HepG2 (cell line): ENCODE measurements at regions of chr1 and their contacts with region 1.

Region 1: GRCh38 chr1:153990468-153991150 is at the start of gene RPS27:
- DNase-seq: peak; percentile 98
- ATAC-seq: peak; percentile 24
- H3K4me3 ChIP-seq: peak within 1 kb of the TSS; percentile 77 to 97 (median 94)
- H3K27ac ChIP-seq: peak within 1 kb of the TSS; percentile 85
- H3K4me1 ChIP-seq: peaks cover 27% of the 10 kb centered on the region
- H3K27me3 ChIP-seq: no peaks in the 10 kb centered on the region; a peak in 1 of 5 replicates
- CTCF ChIP-seq: no peak
- EP300 ChIP-seq: peak; percentile 22 to 76; a peak in 3 of 4 replicates
- POLR2A ChIP-seq: peak; percentile 100
- RAD21 ChIP-seq: 0 out of 2 replicates have a peak, but pooled peaks have one; percentile 25
- total RNA-seq, gene RPS27: 3,737 and 4,047 TPM in 2 replicates

Region 2: GRCh38 chr1:153677718-153678505 is 312.7 kb before region 1 on chr1:
- CTCF ChIA-PET with region 1: no interaction called
- POLR2A ChIA-PET with region 1: no interaction called
- in situ Hi-C with region 1: loop called (anchors 10 kb)
- intact Hi-C with region 1: loop called (anchors 5 kb)
- DNase-seq: no peak
- ATAC-seq: peak; percentile 58
- H3K4me3 ChIP-seq: peak overlapping the region in 2 of 3 experiments; percentile 57 to 72; a peak in 4 of 6 replicates
- H3K27ac ChIP-seq: no peak overlapping the region
- H3K4me1 ChIP-seq: peaks cover 25% of the 10 kb centered on the region
- H3K27me3 ChIP-seq: peaks cover 20 to 51% of the 10 kb centered on the region in 2 experiments
- CTCF ChIP-seq: peak; percentile 92
- EP300 ChIP-seq: no peak
- POLR2A ChIP-seq: no peak
- RAD21 ChIP-seq: peak; percentile 88

Region 3: DNA sequence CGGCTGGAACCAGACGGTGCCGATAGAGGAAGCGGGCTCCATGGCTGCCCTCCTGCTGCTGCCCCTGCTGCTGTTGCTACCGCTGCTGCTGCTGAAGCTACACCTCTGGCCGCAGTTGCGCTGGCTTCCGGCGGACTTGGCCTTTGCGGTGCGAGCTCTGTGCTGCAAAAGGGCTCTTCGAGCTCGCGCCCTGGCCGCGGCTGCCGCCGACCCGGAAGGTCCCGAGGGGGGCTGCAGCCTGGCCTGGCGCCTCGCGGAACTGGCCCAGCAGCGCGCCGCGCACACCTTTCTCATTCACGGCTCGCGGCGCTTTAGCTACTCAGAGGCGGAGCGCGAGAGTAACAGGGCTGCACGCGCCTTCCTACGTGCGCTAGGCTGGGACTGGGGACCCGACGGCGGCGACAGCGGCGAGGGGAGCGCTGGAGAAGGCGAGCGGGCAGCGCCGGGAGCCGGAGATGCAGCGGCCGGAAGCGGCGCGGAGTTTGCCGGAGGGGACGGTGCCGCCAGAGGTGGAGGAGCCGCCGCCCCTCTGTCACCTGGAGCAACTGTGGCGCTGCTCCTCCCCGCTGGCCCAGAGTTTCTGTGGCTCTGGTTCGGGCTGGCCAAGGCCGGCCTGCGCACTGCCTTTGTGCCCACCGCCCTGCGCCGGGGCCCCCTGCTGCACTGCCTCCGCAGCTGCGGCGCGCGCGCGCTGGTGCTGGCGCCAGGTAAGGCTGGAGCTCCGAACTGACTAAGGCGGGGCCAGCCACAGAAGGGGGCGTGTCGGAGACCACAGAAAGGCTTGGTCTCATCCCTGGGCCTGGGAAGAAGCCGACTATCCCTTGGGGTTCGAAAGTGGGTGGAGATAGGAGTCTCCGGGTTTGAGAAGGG is 214.9 kb before region 1 on chr1:
- CTCF ChIA-PET with region 1: no interaction called
- POLR2A ChIA-PET with region 1: interaction called, 14 read pairs
- in situ Hi-C with region 1: no loop called
- intact Hi-C with region 1: no loop called
- DNase-seq: no peak
- ATAC-seq: peak; percentile 76
- H3K4me3 ChIP-seq: peak overlapping the region; percentile 70 to 83 (median 75)
- H3K27ac ChIP-seq: peak overlapping the region; percentile 53
- H3K4me1 ChIP-seq: peaks cover 50% of the 10 kb centered on the region
- H3K27me3 ChIP-seq: no peaks in the 10 kb centered on the region
- CTCF ChIP-seq: peak; percentile 31
- EP300 ChIP-seq: no peak
- POLR2A ChIP-seq: peak in 1 of 2 experiments; percentile 77; a peak in 1 of 4 replicates
- RAD21 ChIP-seq: 0 out of 2 replicates have a peak, but pooled peaks have one; percentile 8

Region 4: DNA sequence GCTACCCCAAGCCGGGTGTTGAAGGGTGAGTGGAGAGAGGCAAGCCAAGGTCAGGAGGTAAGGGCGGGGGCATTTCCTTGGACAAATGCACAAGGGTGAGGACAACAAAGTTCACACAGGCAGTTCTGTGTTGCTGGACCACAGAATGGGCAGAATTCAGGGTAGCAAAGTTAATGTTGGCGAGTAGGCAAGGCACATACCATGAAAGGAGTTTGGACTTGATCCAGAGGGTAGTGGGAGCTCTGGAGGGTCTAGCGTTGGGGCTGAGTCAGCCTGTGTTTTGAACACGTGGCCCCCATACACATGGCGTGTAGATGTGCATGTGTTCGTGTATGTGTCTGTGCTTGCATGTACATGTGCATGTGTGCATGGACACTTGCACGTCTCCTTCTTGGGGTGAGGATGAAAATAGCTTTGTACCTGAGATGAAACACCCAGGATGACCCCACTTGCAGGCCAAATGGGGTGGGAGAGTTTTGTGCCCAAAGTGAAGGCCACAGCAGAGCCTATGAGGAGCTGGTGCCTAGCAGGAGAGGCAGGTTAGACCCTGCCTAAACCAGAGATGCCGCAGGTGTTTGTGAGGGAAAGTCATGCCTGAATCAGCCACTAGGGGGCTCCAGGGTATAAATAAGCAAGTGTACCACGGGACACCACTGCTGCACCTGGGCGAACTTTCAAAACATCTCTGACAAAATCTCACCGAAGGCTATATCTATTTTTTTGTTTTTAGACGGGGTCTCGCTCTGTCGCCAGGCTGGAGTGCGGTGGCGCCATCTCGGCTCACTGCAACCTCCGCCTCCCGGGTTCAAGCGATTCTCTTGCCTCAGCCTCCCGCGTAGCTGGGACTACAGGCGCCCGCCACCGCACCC is 193.6 kb before region 1 on chr1:
- CTCF ChIA-PET with region 1: interaction called, 35 read pairs
- POLR2A ChIA-PET with region 1: interaction called, 17 read pairs
- in situ Hi-C with region 1: loop called (anchors 5 kb)
- intact Hi-C with region 1: loop called (anchors 1 kb)
- DNase-seq: peak; percentile 65
- ATAC-seq: peak; percentile 66
- H3K4me3 ChIP-seq: no peak overlapping the region
- H3K27ac ChIP-seq: no peak overlapping the region
- H3K4me1 ChIP-seq: peaks cover 39% of the 10 kb centered on the region
- H3K27me3 ChIP-seq: peaks cover 7 to 45% of the 10 kb centered on the region in 2 experiments; a peak in 4 of 5 replicates
- CTCF ChIP-seq: peak; percentile 84
- EP300 ChIP-seq: no peak
- POLR2A ChIP-seq: no peak
- RAD21 ChIP-seq: peak; percentile 67

Region 5: GRCh38 chr1:153827168-153827964 is 163.2 kb before region 1 on chr1:
- CTCF ChIA-PET with region 1: no interaction called
- POLR2A ChIA-PET with region 1: no interaction called
- in situ Hi-C with region 1: no loop called
- intact Hi-C with region 1: no loop called
- DNase-seq: no peak
- ATAC-seq: no peak
- H3K4me3 ChIP-seq: no peak overlapping the region
- H3K27ac ChIP-seq: no peak overlapping the region
- H3K4me1 ChIP-seq: no peaks in the 10 kb centered on the region
- H3K27me3 ChIP-seq: no peaks in the 10 kb centered on the region
- CTCF ChIP-seq: no peak
- EP300 ChIP-seq: no peak
- POLR2A ChIP-seq: no peak
- RAD21 ChIP-seq: no peak

Region 6: GRCh38 chr1:153946622-153947241 is 43.9 kb before region 1 on chr1 and contains the start of gene DENND4B:
- CTCF ChIA-PET with region 1: interaction called, 7 read pairs
- POLR2A ChIA-PET with region 1: interaction called, 21 read pairs
- in situ Hi-C with region 1: no loop called
- intact Hi-C with region 1: loop called (anchors 1 kb)
- DNase-seq: peak; percentile 75
- ATAC-seq: peak; percentile 93
- H3K4me3 ChIP-seq: peak within 1 kb of the TSS; percentile 71 to 98 (median 81)
- H3K27ac ChIP-seq: peak within 1 kb of the TSS; percentile 71
- H3K4me1 ChIP-seq: peaks cover 40% of the 10 kb centered on the region
- H3K27me3 ChIP-seq: no peaks in the 10 kb centered on the region
- CTCF ChIP-seq: peak; percentile 92
- EP300 ChIP-seq: 0 out of 4 replicates have a peak, but pooled peaks of 1 of the 2 experiments have one; percentile 31
- POLR2A ChIP-seq: 0 out of 4 replicates have a peak, but pooled peaks of 1 of the 2 experiments have one; percentile 5
- RAD21 ChIP-seq: peak; percentile 85
- total RNA-seq, gene DENND4B: 8.7 and 15.1 TPM in 2 replicates

Region 7: DNA sequence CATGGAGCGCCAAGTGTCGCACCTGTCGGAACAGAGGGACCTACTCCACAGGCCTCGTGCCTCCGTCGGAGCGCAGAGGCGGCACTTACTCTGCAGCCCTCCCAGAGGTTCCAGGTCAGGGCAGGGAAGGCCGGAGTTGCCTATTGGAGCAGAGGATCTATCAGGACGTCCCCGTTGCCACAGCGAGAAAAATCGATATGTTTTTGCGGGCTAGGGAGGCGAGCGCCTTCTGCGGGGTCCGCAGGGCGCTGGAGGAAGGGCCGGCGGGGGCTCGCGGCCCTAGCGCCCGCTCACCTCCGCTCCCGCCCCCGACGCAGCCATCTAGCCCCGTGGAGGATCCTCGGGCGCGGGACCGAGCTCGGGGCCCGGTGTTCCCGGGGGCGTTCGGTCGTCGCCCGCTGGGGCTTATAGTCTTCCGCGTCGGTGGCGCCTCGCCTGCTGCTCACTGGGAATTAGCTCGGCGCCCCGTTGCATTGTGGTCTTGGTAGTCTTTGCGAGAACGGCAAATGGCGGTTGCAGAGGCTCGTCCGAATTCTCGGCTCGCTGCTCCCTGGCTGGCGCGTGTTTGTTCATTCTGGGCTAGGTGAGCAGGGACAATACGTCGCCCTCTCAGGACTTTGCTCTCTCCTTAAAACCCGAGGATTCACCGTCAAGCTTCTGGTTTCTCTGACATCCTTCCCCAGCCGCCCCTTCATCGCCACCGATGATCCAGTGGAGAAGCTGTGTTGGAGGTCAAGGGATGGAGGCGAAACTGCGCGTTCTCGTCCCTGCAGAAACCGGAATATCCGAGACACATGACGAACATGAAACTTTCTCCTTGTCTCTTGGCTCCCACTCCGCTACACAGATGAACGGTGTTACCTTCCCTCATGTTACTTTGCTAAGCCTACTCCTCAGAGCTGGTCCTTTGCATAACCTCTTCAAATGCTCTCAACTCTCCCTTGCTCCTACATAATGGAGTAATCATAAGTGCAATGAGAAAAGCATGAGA is 13.1 kb before region 1 on chr1 and contains the start of gene JTB:
- CTCF ChIA-PET with region 1: no interaction called
- POLR2A ChIA-PET with region 1: interaction called, 55 read pairs
- in situ Hi-C with region 1: no loop called
- intact Hi-C with region 1: loop called (anchors 1 kb)
- DNase-seq: peak; percentile 83
- ATAC-seq: peak; percentile 94
- H3K4me3 ChIP-seq: peak within 1 kb of the TSS; percentile 72 to 79 (median 77)
- H3K27ac ChIP-seq: peak within 1 kb of the TSS; percentile 88
- H3K4me1 ChIP-seq: peaks cover 25% of the 10 kb centered on the region
- H3K27me3 ChIP-seq: no peaks in the 10 kb centered on the region
- CTCF ChIP-seq: no peak; the same call in 1 of the 2 replicates
- EP300 ChIP-seq: no peak
- POLR2A ChIP-seq: peak; percentile 86 to 88
- RAD21 ChIP-seq: 0 out of 2 replicates have a peak, but pooled peaks have one; percentile 30
- total RNA-seq, gene JTB: 66.8 and 99.2 TPM in 2 replicates